Panc1 (cell line): ENCODE measurements at regions of chr4 and their contacts with region 1.

Region 1: DNA sequence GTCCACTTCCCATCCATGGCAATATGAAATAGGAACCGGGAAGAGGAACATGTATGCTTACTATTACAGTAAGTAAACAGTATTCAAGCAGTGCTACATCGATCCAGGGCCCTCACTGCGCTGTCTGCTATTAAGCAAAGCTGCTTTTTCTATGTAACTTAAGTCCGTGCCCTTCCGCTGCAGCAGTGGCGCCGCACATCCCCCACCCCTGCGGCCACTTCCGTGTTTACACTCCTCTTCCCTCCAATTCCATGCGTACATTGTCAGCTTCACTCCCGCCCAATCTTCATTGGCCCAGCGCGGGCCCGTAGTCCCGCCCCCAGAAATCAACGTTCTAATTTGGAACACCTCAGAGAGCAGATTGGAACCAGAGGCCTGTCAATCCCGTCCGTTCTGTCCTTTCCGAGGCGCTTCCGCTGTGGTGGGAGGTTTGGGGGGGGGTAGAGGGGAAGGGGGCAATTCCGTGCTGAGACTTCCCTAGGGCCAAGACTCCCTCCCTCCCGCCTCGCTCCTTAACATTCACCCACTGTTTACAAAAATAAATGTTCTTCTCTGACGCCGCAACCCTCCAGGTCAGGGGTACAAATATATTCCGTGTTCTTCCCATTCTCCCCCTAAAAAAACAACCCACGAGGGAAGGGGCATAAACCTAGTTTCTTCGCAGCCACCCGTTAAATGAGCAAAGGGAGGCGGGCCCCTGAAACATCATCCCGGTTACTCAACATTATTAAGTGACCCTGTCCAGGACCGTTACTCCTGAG is 67.3 kb downstream of the NOCT start:
- DNase-seq: peak; percentile 87
- ATAC-seq: peak; percentile 92
- H3K4me3 ChIP-seq: peak overlapping the region; percentile 88 to 95
- H3K27ac ChIP-seq: peak overlapping the region; percentile 95
- H3K4me1 ChIP-seq: peaks cover 24% of the 10 kb centered on the region
- H3K27me3 ChIP-seq: no peaks in the 10 kb centered on the region
- CTCF ChIP-seq: no peak

Region 2: DNA sequence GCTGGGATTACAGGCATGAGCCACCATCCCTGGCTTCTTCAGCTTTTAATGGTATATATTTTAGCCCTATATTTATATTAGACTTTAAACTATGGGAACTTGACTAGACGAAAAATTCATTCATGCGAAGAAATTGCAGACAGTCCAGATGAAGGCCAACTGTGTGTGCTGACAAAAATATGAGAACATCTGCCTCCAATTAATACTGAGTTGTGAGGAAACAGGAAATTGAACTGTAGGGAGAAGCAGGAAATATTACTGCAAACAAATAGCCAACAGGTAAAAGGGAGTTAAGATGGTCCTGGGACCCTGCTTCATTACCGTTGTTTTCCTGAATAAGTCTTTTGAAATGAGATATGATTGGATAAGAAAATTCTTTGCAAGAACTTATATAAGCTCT is 170.8 kb after region 1 on chr4:
- CTCF ChIA-PET with region 1: no interaction called
- POLR2A ChIA-PET with region 1: no interaction called
- in situ Hi-C with region 1: no loop called
- intact Hi-C with region 1: no loop called
- DNase-seq: no peak
- ATAC-seq: no peak
- H3K4me3 ChIP-seq: no peak overlapping the region
- H3K27ac ChIP-seq: no peak overlapping the region
- H3K4me1 ChIP-seq: no peaks in the 10 kb centered on the region
- H3K27me3 ChIP-seq: no peaks in the 10 kb centered on the region
- CTCF ChIP-seq: no peak

Region 3: DNA sequence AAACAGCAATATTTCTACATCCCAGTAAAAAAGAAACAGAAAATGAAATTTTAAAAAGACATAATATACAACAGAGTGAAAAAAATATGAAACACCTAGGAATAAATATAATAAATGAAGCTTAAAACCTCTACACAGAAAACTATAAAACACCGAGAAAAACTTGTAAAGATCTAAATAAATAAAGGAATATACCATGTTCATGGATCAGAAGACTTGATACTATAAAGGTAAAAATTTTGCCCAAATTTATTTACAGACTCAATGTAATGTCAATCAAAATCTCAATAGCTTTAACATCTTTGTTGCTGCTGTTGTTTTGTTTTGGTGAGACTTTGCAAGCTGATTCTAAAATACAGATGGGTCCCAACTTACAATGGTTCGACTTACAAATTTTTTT is 1667.5 kb after region 1 on chr4:
- CTCF ChIA-PET with region 1: no interaction called
- POLR2A ChIA-PET with region 1: interaction called, 18 read pairs
- in situ Hi-C with region 1: no loop called
- intact Hi-C with region 1: no loop called
- DNase-seq: no peak
- ATAC-seq: no peak
- H3K4me3 ChIP-seq: no peak overlapping the region
- H3K27ac ChIP-seq: no peak overlapping the region
- H3K4me1 ChIP-seq: no peaks in the 10 kb centered on the region; the same call in none of the 2 replicates
- H3K27me3 ChIP-seq: no peaks in the 10 kb centered on the region
- CTCF ChIP-seq: no peak